CD4-positive, alpha-beta memory T cell (primary cell): ENCODE measurements at regions of chr10 and their contacts with region 1.

Region 1: GRCh38 chr10:74081192-74081803 is 69.3 kb downstream of the AP3M1 start:
- DNase-seq: peak in 4 of 5 donors; percentile 45 to 55 (median 49)
- H3K4me3 ChIP-seq: no peak overlapping the region
- H3K4me3 Mint-ChIP-seq: peak overlapping the region in 1 of 8 donors; percentile 1
- H3K27ac ChIP-seq: no peak overlapping the region
- H3K27ac Mint-ChIP-seq: peak overlapping the region in 6 of 7 donors; percentile 1 to 76 (median 25)
- H3K4me1 ChIP-seq: peaks cover 17% of the 10 kb centered on the region
- H3K4me1 Mint-ChIP-seq: peaks cover 22 to 48% (median 35%) of the 10 kb centered on the region in 4 donors
- H3K27me3 ChIP-seq: no peaks in the 10 kb centered on the region
- H3K27me3 Mint-ChIP-seq: no peaks in the 10 kb centered on the region

Region 2: GRCh38 chr10:73848821-73849489 is 232.3 kb before region 1 on chr10:
- CTCF ChIA-PET with region 1: no interaction called
- POLR2A ChIA-PET with region 1: no interaction called
- intact Hi-C with region 1: loop called (anchors 1 kb)
- DNase-seq: peak; percentile 87 to 92 (median 89)
- H3K4me3 ChIP-seq: no peak overlapping the region
- H3K4me3 Mint-ChIP-seq: peak overlapping the region in 5 of 8 donors; percentile 26 to 59 (median 27)
- H3K27ac ChIP-seq: peak overlapping the region; percentile 46
- H3K27ac Mint-ChIP-seq: peak overlapping the region; percentile 83 to 96 (median 94)
- H3K4me1 ChIP-seq: peaks cover 8% of the 10 kb centered on the region
- H3K4me1 Mint-ChIP-seq: peaks cover 14 to 28% (median 16%) of the 10 kb centered on the region in 4 donors
- H3K27me3 ChIP-seq: no peaks in the 10 kb centered on the region
- H3K27me3 Mint-ChIP-seq: no peaks in the 10 kb centered on the region

Region 3: DNA sequence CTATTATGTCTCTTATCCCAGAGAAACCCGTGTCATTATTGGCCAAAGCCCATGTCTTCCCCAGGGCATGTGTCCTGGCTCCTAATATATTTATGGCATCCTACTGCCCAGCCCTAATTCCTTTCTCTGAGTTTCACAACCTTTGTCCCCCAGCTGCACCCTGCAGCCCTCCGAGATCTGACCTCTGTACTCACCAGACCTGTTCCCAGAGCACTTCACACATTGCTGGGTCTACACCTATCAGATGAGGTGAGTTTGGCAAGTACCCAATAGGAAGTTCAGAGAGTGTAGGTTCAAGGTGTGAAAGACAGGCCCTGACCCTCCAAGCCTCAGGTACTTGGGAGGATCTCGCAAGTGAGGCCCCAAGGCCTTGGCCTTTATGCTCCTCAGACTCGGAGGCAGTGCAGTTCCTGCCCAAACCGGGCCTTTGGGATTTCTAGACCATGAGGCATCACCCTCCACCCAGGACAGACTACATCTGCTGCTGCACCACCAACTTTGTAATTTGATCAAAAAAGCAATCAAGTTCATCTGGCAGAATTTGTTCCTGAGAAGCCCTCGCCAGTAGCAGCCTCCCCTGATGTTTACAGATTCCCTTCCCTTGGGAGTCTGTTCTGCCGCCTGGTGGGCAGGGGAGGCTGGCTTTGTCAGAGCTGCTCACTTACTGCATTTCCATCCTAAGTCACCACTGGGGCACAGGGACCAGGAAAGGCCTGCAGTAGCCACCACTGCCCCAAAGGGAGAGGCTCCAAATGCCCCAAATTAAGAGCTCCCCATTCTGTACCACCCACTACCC is 209.2 kb before region 1 on chr10:
- CTCF ChIA-PET with region 1: no interaction called
- POLR2A ChIA-PET with region 1: no interaction called
- intact Hi-C with region 1: no loop called
- DNase-seq: no peak
- H3K4me3 ChIP-seq: no peak overlapping the region
- H3K4me3 Mint-ChIP-seq: peak overlapping the region; percentile 83 to 90 (median 88)
- H3K27ac ChIP-seq: no peak overlapping the region
- H3K27ac Mint-ChIP-seq: peak overlapping the region; percentile 58 to 93 (median 87)
- H3K4me1 ChIP-seq: peaks cover 75% of the 10 kb centered on the region
- H3K4me1 Mint-ChIP-seq: peaks cover 46 to 84% (median 71%) of the 10 kb centered on the region in 4 donors
- H3K27me3 ChIP-seq: no peaks in the 10 kb centered on the region
- H3K27me3 Mint-ChIP-seq: no peaks in the 10 kb centered on the region

Region 4: DNA sequence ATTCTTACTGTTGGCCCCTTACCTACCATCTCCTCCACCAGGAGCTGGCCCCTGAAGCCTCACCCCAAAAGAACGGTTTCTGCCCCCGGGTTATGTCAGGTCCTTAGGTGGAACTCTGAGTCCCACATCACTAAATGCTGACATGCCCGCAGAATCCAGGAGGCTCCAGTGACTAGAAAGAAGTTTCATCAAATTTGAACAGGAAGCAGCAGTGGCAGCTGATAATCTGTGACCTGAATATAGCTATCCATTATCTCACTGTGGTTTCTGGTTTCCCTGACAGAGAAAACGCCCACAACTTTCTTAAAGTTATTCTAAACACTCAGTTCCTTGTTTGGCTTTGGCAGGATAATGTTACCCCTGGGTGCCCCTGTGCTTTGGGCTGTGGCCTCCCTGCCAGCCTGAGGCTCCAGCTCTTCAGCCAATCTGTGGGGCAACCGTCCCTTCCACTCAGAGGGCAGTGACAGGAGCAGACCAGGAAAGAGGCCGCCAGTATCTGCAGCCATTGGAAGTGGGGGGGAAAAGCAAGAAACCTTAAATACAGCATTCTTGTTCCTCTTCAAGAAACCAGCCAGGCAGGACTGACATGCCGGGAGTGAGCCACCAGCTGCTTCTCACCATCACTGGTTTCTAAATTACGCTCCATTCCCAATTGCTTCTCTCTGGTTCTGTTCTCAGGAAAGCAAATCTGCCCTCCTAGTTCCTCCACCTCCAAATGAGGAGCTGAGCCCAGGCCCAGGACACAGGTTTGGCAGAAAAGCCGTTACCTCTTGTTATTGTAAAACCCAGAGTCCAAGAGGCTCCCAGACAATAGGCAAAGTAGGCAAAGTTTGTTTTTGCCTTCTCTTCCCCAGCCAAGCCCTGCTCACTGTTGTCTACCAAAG is 124.6 kb before region 1 on chr10:
- CTCF ChIA-PET with region 1: interaction called, 24 read pairs
- POLR2A ChIA-PET with region 1: interaction called, 5 read pairs
- intact Hi-C with region 1: loop called (anchors 1 kb)
- DNase-seq: peak; percentile 64 to 78 (median 72)
- H3K4me3 ChIP-seq: peak overlapping the region; percentile 4 to 30
- H3K4me3 Mint-ChIP-seq: peak overlapping the region; percentile 66 to 94 (median 86)
- H3K27ac ChIP-seq: peak overlapping the region; percentile 52
- H3K27ac Mint-ChIP-seq: peak overlapping the region; percentile 94 to 99 (median 97)
- H3K4me1 ChIP-seq: peaks cover 70% of the 10 kb centered on the region
- H3K4me1 Mint-ChIP-seq: peaks cover 43 to 64% (median 54%) of the 10 kb centered on the region in 4 donors
- H3K27me3 ChIP-seq: no peaks in the 10 kb centered on the region
- H3K27me3 Mint-ChIP-seq: no peaks in the 10 kb centered on the region

Region 5: DNA sequence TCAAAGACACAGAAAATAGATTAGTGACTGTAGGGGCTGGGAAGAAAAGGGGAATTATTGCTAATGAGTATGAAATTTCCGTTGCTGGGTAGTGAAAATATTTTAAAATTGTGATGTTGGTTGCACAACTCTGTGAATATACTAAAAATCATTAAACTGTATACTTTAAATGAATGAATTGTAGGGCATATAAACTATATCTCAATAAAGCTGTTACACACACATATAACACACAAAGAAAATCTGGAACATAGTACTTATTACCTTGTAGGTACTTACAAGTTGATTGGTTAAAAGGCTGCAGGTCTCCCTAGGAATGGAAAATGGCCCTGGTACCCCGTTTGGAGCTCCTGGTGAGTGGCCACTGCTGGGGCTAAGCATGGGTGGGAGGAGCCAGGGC is 110.5 kb before region 1 on chr10:
- CTCF ChIA-PET with region 1: no interaction called
- POLR2A ChIA-PET with region 1: no interaction called
- intact Hi-C with region 1: no loop called
- DNase-seq: no peak
- H3K4me3 ChIP-seq: no peak overlapping the region
- H3K4me3 Mint-ChIP-seq: no peak overlapping the region
- H3K27ac ChIP-seq: no peak overlapping the region
- H3K27ac Mint-ChIP-seq: no peak overlapping the region
- H3K4me1 ChIP-seq: peaks cover 29% of the 10 kb centered on the region
- H3K4me1 Mint-ChIP-seq: peaks cover 17 to 42% (median 31%) of the 10 kb centered on the region in 4 donors
- H3K27me3 ChIP-seq: no peaks in the 10 kb centered on the region
- H3K27me3 Mint-ChIP-seq: no peaks in the 10 kb centered on the region

Region 6: GRCh38 chr10:74049955-74050354 is 31.3 kb before region 1 on chr10:
- CTCF ChIA-PET with region 1: interaction called, 16 read pairs
- POLR2A ChIA-PET with region 1: no interaction called
- intact Hi-C with region 1: no loop called
- DNase-seq: no peak
- H3K4me3 ChIP-seq: no peak overlapping the region
- H3K4me3 Mint-ChIP-seq: no peak overlapping the region
- H3K27ac ChIP-seq: no peak overlapping the region
- H3K27ac Mint-ChIP-seq: no peak overlapping the region
- H3K4me1 ChIP-seq: peaks cover 23% of the 10 kb centered on the region
- H3K4me1 Mint-ChIP-seq: peaks cover 17 to 39% (median 28%) of the 10 kb centered on the region in 4 donors
- H3K27me3 ChIP-seq: no peaks in the 10 kb centered on the region
- H3K27me3 Mint-ChIP-seq: no peaks in the 10 kb centered on the region

Region 7: DNA sequence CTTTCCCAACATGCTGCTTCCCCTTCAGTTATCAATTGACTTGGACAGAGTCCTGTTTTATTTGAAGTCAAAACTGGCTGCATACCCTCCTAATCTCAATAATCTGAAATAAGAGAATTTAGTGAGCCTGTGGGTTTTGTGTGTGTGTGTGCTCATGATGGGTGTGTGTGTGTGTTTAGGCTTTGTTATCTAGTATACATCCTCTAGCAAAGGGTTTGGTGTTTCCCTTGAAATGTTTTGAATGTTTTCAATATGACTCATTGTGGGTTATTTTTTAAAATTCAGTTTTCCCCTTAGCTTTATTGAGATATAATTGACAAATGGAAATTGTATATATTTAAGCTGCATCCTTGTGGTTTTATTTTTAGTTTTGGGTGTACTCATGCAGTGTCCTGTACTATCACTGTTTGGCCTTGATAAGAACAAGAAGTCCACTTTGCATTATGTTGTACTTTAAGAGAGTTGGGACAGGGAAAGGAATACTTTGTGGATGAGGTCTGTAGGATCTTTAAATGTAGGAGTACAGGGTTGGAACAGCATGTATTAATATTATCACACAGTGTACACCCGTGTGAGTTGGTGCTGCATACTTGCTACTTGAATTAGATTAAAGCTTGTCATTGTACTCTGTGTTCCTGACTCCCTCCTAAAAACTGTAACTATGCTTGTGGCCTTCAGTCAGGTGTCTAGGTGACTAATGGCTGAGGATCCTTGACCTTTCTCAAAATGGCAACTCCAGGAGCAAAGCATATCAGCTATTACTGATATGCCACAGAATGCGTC is 25.1 kb before region 1 on chr10:
- CTCF ChIA-PET with region 1: interaction called, 16 read pairs
- POLR2A ChIA-PET with region 1: no interaction called
- intact Hi-C with region 1: no loop called
- DNase-seq: peak in 4 of 5 donors; percentile 8 to 43 (median 26)
- H3K4me3 ChIP-seq: no peak overlapping the region
- H3K4me3 Mint-ChIP-seq: peak overlapping the region in 6 of 8 donors; percentile 2 to 67 (median 31)
- H3K27ac ChIP-seq: no peak overlapping the region
- H3K27ac Mint-ChIP-seq: peak overlapping the region in 6 of 7 donors; percentile 61 to 82 (median 68)
- H3K4me1 ChIP-seq: peaks cover 42% of the 10 kb centered on the region
- H3K4me1 Mint-ChIP-seq: peaks cover 30 to 59% (median 39%) of the 10 kb centered on the region in 4 donors
- H3K27me3 ChIP-seq: no peaks in the 10 kb centered on the region
- H3K27me3 Mint-ChIP-seq: no peaks in the 10 kb centered on the region

Region 8: GRCh38 chr10:74160013-74160412 is 78.7 kb after region 1 on chr10:
- CTCF ChIA-PET with region 1: no interaction called
- POLR2A ChIA-PET with region 1: no interaction called
- intact Hi-C with region 1: no loop called
- DNase-seq: no peak
- H3K4me3 ChIP-seq: no peak overlapping the region
- H3K4me3 Mint-ChIP-seq: no peak overlapping the region
- H3K27ac ChIP-seq: no peak overlapping the region
- H3K27ac Mint-ChIP-seq: peak overlapping the region in 1 of 7 donors; percentile 25
- H3K4me1 ChIP-seq: no peaks in the 10 kb centered on the region
- H3K4me1 Mint-ChIP-seq: peaks cover 0 to 5% (median 3%) of the 10 kb centered on the region in 4 donors
- H3K27me3 ChIP-seq: no peaks in the 10 kb centered on the region
- H3K27me3 Mint-ChIP-seq: no peaks in the 10 kb centered on the region

Region 9: GRCh38 chr10:75982611-75983369 is 1901.5 kb after region 1 on chr10:
- CTCF ChIA-PET with region 1: no interaction called
- POLR2A ChIA-PET with region 1: no interaction called
- intact Hi-C with region 1: no loop called
- DNase-seq: no peak
- H3K4me3 ChIP-seq: no peak overlapping the region
- H3K4me3 Mint-ChIP-seq: no peak overlapping the region
- H3K27ac ChIP-seq: no peak overlapping the region
- H3K27ac Mint-ChIP-seq: no peak overlapping the region
- H3K4me1 ChIP-seq: no peaks in the 10 kb centered on the region
- H3K4me1 Mint-ChIP-seq: no peaks in the 10 kb centered on the region
- H3K27me3 ChIP-seq: no peaks in the 10 kb centered on the region
- H3K27me3 Mint-ChIP-seq: peaks cover 0 to 8% of the 10 kb centered on the region in 2 donors